Colonic mucosa (tissue), 4 donors: ENCODE measurements at regions of chr4 and their contacts with region 1.

Region 1: DNA sequence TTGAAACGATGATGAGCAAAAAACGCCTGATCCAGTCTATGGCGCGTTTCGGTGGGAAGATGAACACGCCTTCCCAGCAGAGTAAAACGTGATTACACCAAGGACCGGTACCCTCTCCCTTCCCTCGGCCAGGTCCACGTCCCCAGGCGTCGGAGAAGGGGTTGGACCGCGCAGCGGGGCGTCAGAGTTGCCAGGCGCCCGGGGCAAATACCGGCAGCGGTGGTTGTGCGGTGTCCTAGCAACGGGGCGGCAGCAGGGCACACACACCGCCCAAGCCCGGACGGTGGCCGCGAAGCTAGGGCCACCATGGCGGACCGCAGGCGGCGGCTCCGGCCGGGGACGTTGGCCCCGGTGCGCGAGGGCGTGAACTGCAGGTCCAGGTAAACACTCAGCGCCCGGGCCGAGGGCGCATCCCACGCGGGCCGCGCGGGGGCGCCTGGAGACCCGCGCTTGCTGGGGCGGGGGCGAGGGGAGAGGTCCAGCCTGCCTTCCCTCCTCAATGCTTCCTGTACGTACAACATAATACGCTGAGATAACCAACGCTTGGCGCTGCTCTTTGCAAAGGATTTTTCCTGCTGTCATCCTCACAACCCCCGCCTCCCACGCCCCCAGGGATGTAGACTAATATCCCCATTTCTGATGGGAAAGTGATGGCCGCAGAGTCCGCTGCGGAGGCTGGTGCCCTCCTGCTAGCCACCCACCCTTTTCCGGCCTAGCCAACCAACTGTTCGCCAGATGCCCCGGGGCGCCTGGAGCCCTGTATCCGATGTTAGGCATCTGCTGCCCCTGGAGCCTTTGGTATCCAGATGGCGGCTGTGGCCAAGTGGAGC is at the start of gene FAM47E:
- DNase-seq: peak; percentile 76
- H3K4me3 ChIP-seq: peak within 1 kb of the TSS; percentile 70
- H3K27ac ChIP-seq: peak within 1 kb of the TSS; percentile 27
- H3K4me1 ChIP-seq: no peaks in the 10 kb centered on the region
- H3K27me3 ChIP-seq: no peaks in the 10 kb centered on the region
- CTCF ChIP-seq: peak; percentile 40
- total RNA-seq, gene FAM47E: 3.9 to 4.8 TPM

Region 2: GRCh38 chr4:76156635-76157034 is 95.0 kb before region 1 on chr4:
- intact Hi-C with region 1: no loop called
- DNase-seq: no peak
- H3K4me3 ChIP-seq: no peak overlapping the region
- H3K27ac ChIP-seq: no peak overlapping the region
- H3K4me1 ChIP-seq: no peaks in the 10 kb centered on the region
- H3K27me3 ChIP-seq: no peaks in the 10 kb centered on the region
- CTCF ChIP-seq: no peak

Region 3: DNA sequence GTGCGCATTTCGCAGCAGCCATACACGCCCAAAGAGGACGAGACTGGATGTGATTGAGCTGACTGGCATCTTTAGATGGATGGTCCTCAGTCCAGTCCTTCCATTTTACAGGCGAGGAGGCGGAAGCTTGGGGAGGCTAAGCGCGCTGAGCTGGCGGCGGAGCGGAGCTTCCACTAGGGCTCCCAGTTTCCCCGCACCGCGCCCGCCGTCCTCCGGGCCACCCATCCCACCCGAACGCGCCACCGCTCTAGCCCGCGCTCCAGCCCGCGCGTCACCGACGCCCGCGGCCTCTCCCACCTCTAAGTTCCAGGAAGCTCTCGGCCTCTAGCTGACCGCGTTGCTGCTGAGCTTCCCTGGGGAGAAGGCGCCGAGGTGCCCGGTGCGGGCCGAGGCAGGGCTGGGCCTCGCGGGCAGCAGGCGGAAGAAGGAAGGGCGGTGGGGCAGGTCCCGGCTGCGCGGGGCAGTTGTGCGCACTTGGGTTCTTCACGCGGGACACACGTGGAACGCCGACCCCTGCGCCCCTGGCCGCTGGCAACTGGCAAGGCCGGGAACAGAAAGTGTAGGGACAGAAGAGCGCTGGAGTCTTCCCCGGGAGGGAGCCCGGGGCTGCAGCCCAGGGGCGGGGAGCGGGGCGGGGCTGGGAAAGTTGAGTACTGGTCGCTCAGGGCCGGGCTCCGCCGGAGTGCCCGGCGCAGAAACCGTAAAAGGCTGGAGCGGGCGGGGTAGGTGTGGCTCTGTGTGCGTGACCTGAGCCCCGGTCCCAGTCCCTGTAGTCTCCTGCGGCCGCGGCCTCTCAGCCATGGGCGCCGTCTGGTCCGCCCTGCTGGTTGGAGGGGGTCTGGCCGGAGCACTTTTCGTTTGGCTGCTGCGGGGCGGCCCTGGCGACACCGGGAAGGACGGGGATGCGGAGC is 54.6 kb after region 1 on chr4 and contains the start of gene STBD1:
- intact Hi-C with region 1: loop called (anchors 5 kb)
- DNase-seq: peak; percentile 92
- H3K4me3 ChIP-seq: peak within 1 kb of the TSS; percentile 74
- H3K27ac ChIP-seq: peak within 1 kb of the TSS; percentile 86
- H3K4me1 ChIP-seq: peaks cover under 1% of the 10 kb centered on the region
- H3K27me3 ChIP-seq: no peaks in the 10 kb centered on the region
- CTCF ChIP-seq: no peak
- total RNA-seq, gene STBD1: 11.8 to 39.2 TPM